Naive thymus-derived CD4-positive, alpha-beta T cell (primary cell): ENCODE measurements at regions of chr1 and their contacts with region 1.

Region 1: GRCh38 chr1:69737527-69738185 is 169.9 kb downstream of the LRRC7 start:
- DNase-seq: peak in 4 of 9 donors; percentile 6 to 15 (median 12)
- ATAC-seq: no peak
- H3K4me3 ChIP-seq: no peak overlapping the region
- H3K4me3 Mint-ChIP-seq: no peak overlapping the region
- H3K27ac ChIP-seq: no peak overlapping the region
- H3K27ac Mint-ChIP-seq: no peak overlapping the region
- H3K4me1 ChIP-seq: no peaks in the 10 kb centered on the region
- H3K4me1 Mint-ChIP-seq: no peaks in the 10 kb centered on the region
- H3K27me3 ChIP-seq: no peaks in the 10 kb centered on the region
- H3K27me3 Mint-ChIP-seq: no peaks in the 10 kb centered on the region

Region 2: DNA sequence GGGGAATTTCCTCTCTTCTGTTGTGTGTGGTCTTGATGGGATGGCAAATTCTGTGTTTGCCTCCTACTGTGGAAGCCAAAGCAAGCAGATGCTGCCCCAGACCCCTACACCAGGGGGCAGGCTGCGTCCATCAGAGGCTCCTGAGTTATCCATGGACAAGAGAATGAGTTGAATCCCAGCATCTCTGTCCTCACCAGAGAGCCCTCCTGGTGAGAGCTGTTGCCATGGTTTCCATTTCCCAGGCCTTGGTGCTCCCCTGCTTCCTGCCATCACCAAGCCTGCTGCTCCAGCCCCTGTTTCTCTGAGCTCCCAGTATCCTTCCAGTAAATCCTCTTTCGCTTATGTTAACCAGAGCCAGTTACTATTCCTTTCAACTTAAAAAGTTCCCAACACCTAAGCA is 1884.0 kb before region 1 on chr1:
- CTCF ChIA-PET with region 1: no interaction called
- POLR2A ChIA-PET with region 1: no interaction called
- intact Hi-C with region 1: loop called in 1 of 2 experiments (anchors 5 kb)
- DNase-seq: no peak
- ATAC-seq: no peak
- H3K4me3 ChIP-seq: no peak overlapping the region
- H3K4me3 Mint-ChIP-seq: no peak overlapping the region
- H3K27ac ChIP-seq: no peak overlapping the region
- H3K27ac Mint-ChIP-seq: no peak overlapping the region
- H3K4me1 ChIP-seq: no peaks in the 10 kb centered on the region
- H3K4me1 Mint-ChIP-seq: no peaks in the 10 kb centered on the region
- H3K27me3 ChIP-seq: no peaks in the 10 kb centered on the region
- H3K27me3 Mint-ChIP-seq: peaks cover 18 to 29% (median 22%) of the 10 kb centered on the region in 5 donors

Region 3: GRCh38 chr1:68470388-68470970 is 1267.2 kb before region 1 on chr1:
- CTCF ChIA-PET with region 1: no interaction called
- POLR2A ChIA-PET with region 1: no interaction called
- intact Hi-C with region 1: loop called in 1 of 2 experiments (anchors 1 kb)
- DNase-seq: no peak
- ATAC-seq: no peak
- H3K4me3 ChIP-seq: no peak overlapping the region
- H3K4me3 Mint-ChIP-seq: no peak overlapping the region
- H3K27ac ChIP-seq: no peak overlapping the region
- H3K27ac Mint-ChIP-seq: no peak overlapping the region
- H3K4me1 ChIP-seq: no peaks in the 10 kb centered on the region
- H3K4me1 Mint-ChIP-seq: peaks cover 0 to 2% (median 0%) of the 10 kb centered on the region in 7 donors
- H3K27me3 ChIP-seq: no peaks in the 10 kb centered on the region
- H3K27me3 Mint-ChIP-seq: peaks cover 0 to 5% (median 0%) of the 10 kb centered on the region in 5 donors

Region 4: DNA sequence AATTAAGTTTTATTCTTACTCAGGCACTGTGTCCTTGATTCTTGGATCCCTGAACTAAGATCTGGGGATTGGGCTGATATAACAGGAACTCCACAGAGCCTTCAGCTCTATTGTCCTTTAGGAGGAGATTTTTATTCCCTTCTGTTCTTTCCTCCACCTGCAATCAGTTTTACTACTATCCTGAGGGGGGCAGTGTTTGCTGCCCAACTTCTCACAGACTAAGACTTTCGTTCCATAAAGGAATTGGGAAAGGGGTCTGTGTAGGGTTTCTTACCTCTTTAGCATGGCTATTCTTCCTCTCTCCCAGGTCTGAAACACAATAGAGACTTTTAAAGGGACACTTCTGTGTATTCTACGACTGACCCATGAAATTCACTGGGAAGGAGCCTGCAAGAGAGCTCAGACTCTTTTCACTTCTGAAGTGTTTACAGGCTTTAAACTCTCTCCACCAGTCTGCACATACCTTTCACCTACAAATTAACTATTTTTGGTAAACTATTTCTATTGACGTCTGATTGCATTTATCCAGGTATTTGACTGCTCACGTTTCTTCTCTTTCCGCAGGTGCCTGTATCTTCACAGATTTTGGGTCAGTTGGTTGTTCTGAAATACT is 1137.5 kb before region 1 on chr1:
- CTCF ChIA-PET with region 1: no interaction called
- POLR2A ChIA-PET with region 1: no interaction called
- intact Hi-C with region 1: loop called in 1 of 2 experiments (anchors 2 kb)
- DNase-seq: no peak
- ATAC-seq: no peak
- H3K4me3 ChIP-seq: no peak overlapping the region
- H3K4me3 Mint-ChIP-seq: no peak overlapping the region
- H3K27ac ChIP-seq: no peak overlapping the region
- H3K27ac Mint-ChIP-seq: no peak overlapping the region
- H3K4me1 ChIP-seq: no peaks in the 10 kb centered on the region
- H3K4me1 Mint-ChIP-seq: peaks cover 0 to 2% (median 0%) of the 10 kb centered on the region in 7 donors
- H3K27me3 ChIP-seq: no peaks in the 10 kb centered on the region
- H3K27me3 Mint-ChIP-seq: no peaks in the 10 kb centered on the region

Region 5: DNA sequence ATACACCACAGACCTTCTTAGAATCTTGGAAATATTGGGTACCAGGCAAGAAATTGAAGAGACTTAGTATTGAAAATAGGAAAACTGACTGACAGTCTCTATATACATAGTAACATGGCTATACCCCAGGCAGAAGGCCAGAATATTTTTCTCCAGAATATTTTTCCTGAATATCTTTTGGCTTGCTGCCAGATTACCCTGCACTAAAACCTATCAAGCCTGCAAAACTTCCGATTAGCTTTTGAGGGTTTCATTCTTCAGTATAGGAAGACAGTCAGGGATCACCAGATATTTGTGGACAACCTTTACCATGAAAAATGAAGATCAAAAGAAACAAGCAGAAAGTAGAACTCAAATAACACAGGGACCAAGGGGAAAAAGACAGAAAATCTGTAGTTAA is 18.0 kb after region 1 on chr1:
- CTCF ChIA-PET with region 1: no interaction called
- POLR2A ChIA-PET with region 1: no interaction called
- intact Hi-C with region 1: no loop called
- DNase-seq: no peak
- ATAC-seq: no peak
- H3K4me3 ChIP-seq: no peak overlapping the region
- H3K4me3 Mint-ChIP-seq: no peak overlapping the region
- H3K27ac ChIP-seq: no peak overlapping the region
- H3K27ac Mint-ChIP-seq: no peak overlapping the region
- H3K4me1 ChIP-seq: no peaks in the 10 kb centered on the region
- H3K4me1 Mint-ChIP-seq: no peaks in the 10 kb centered on the region
- H3K27me3 ChIP-seq: no peaks in the 10 kb centered on the region
- H3K27me3 Mint-ChIP-seq: no peaks in the 10 kb centered on the region

Region 6: GRCh38 chr1:69878338-69878737 is 140.7 kb after region 1 on chr1:
- CTCF ChIA-PET with region 1: no interaction called
- POLR2A ChIA-PET with region 1: no interaction called
- intact Hi-C with region 1: no loop called
- DNase-seq: no peak
- ATAC-seq: no peak
- H3K4me3 ChIP-seq: no peak overlapping the region
- H3K4me3 Mint-ChIP-seq: no peak overlapping the region
- H3K27ac ChIP-seq: no peak overlapping the region
- H3K27ac Mint-ChIP-seq: no peak overlapping the region
- H3K4me1 ChIP-seq: no peaks in the 10 kb centered on the region
- H3K4me1 Mint-ChIP-seq: no peaks in the 10 kb centered on the region
- H3K27me3 ChIP-seq: no peaks in the 10 kb centered on the region
- H3K27me3 Mint-ChIP-seq: no peaks in the 10 kb centered on the region